CD4-positive, alpha-beta T cell (primary cell): ENCODE measurements at regions of chr7 and their contacts with region 1.

Region 1: GRCh38 chr7:63918986-63919385 is 79.7 kb upstream of the ZNF722 start:
- DNase-seq: no peak
- ATAC-seq: no peak
- H3K4me3 ChIP-seq: no peak overlapping the region
- H3K4me3 Mint-ChIP-seq: no peak overlapping the region
- H3K27ac ChIP-seq: no peak overlapping the region
- H3K27ac Mint-ChIP-seq: no peak overlapping the region
- H3K4me1 ChIP-seq: no peaks in the 10 kb centered on the region
- H3K4me1 Mint-ChIP-seq: no peaks in the 10 kb centered on the region
- H3K27me3 ChIP-seq: no peaks in the 10 kb centered on the region
- H3K27me3 Mint-ChIP-seq: no peaks in the 10 kb centered on the region
- CTCF ChIP-seq: no peak

Region 2: DNA sequence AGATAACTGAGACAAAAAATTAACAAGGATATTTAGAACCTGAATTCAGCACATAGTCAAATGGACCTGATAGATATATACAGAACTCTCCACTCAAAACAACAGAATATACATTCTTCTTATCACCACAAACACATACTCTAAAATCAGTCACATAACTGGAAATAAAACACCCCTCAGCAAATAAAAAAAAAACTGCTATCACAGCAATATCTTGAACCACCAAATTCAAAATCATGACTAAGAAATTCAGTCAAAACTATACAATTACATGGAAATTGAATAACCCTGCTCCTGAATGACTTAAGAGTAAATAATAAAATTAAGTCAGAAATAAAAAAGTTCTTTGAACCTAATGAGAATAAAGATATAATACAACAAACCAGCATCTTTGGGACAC is 49.6 kb after region 1 on chr7:
- CTCF ChIA-PET with region 1: no interaction called
- POLR2A ChIA-PET with region 1: no interaction called
- intact Hi-C with region 1: loop called in 1 of 2 experiments (anchors 5 kb)
- DNase-seq: no peak
- ATAC-seq: no peak
- H3K4me3 ChIP-seq: no peak overlapping the region
- H3K4me3 Mint-ChIP-seq: no peak overlapping the region
- H3K27ac ChIP-seq: no peak overlapping the region
- H3K27ac Mint-ChIP-seq: no peak overlapping the region
- H3K4me1 ChIP-seq: no peaks in the 10 kb centered on the region
- H3K4me1 Mint-ChIP-seq: no peaks in the 10 kb centered on the region
- H3K27me3 ChIP-seq: no peaks in the 10 kb centered on the region
- H3K27me3 Mint-ChIP-seq: no peaks in the 10 kb centered on the region
- CTCF ChIP-seq: no peak